Left cardiac atrium (tissue), 4 donors: ENCODE measurements at regions of chr12 and their contacts with region 1.

Region 1: GRCh38 chr12:56724972-56725722 is at the start of gene NACA:
- DNase-seq: peak; percentile 100
- ATAC-seq: peak; percentile 98
- total RNA-seq, gene NACA: 516 to 593 TPM

Region 2: GRCh38 chr12:56645717-56646446 is 79.3 kb before region 1 on chr12 and contains the start of gene ATP5F1B:
- intact Hi-C with region 1: loop called in 1 of 2 experiments (anchors 10 kb)
- DNase-seq: peak; percentile 97
- ATAC-seq: peak; percentile 98 to 99
- total RNA-seq, gene ATP5F1B: 1,539 to 1,844 TPM

Region 3: DNA sequence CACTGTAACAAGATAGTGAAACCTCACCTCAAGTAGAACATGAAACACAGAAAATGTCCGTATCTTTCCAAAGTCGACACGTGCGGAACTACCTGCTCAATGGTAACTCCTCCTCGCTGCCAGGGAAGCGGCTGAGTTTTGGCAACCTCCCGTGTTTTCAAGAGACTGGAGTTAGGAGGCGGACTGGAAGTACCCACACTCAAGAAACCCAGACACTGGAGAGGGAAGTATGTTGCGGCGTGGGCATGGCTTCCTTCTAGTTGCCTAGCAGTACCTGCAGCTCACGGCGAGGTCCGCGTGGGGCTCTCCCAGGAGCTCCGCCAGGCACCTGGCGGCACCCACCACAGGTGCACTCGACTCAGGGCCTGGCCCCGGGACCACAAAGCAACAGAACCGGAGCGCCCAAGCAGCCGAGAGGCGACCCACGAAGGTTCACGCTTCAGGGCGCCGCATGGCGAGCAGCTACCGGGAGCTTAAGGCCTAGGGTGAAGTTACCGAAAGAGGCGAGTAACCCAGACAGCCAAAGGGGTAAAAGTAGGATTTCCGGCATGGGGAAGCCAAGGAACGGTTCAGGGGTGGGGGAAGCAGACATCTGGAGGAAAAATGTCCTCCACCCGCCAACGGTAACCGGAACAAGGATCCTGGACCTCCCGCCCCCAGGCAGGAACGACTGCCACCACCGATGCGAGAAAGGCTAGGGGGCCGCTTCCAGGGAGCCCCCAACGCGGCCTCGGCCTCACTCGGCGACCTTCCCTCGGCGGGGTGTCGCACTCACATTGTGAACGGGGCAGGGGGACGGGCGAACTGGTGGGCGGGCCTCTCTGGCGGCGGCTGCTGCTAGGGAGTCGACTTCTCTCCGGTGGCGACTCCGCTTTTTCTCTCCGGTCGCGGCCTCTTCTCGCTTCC is 37.7 kb before region 1 on chr12:
- intact Hi-C with region 1: loop called in 1 of 2 experiments (anchors 2 kb)
- DNase-seq: peak; percentile 55
- ATAC-seq: peak; percentile 52 to 63

Region 4: GRCh38 chr12:56816491-56816890 is 91.3 kb after region 1 on chr12:
- intact Hi-C with region 1: no loop called
- DNase-seq: no peak
- ATAC-seq: no peak